Naive thymus-derived CD4-positive, alpha-beta T cell (primary cell): ENCODE measurements at regions of chr19 and their contacts with region 1.

Region 1: GRCh38 chr19:6737284-6738046 is at the start of gene GPR108:
- DNase-seq: peak; percentile 94 to 100 (median 99)
- ATAC-seq: peak; percentile 85
- H3K4me3 ChIP-seq: peak within 1 kb of the TSS; percentile 87
- H3K4me3 Mint-ChIP-seq: peak within 1 kb of the TSS; percentile 89 to 98 (median 96)
- H3K27ac ChIP-seq: peak within 1 kb of the TSS; percentile 86
- H3K27ac Mint-ChIP-seq: peak within 1 kb of the TSS; percentile 90 to 99 (median 96)
- H3K4me1 ChIP-seq: peaks cover 31 to 32% of the 10 kb centered on the region in 2 donors
- H3K4me1 Mint-ChIP-seq: peaks cover 24 to 41% (median 37%) of the 10 kb centered on the region in 7 donors
- H3K27me3 ChIP-seq: no peaks in the 10 kb centered on the region
- H3K27me3 Mint-ChIP-seq: peaks cover 0 to 3% (median 0%) of the 10 kb centered on the region in 5 donors
- total RNA-seq, gene GPR108: 36.1 to 81.6 (median 61.9) TPM

Region 2: GRCh38 chr19:6362027-6362350 is 375.5 kb before region 1 on chr19:
- CTCF ChIA-PET with region 1: no interaction called
- POLR2A ChIA-PET with region 1: no interaction called
- intact Hi-C with region 1: loop called in 1 of 2 experiments (anchors 1 kb)
- DNase-seq: no peak
- ATAC-seq: no peak
- H3K4me3 ChIP-seq: peak overlapping the region; percentile 76
- H3K4me3 Mint-ChIP-seq: peak overlapping the region; percentile 83 to 100 (median 97)
- H3K27ac ChIP-seq: peak overlapping the region; percentile 82
- H3K27ac Mint-ChIP-seq: peak overlapping the region; percentile 87 to 98 (median 96)
- H3K4me1 ChIP-seq: peaks cover 10 to 13% of the 10 kb centered on the region in 2 donors
- H3K4me1 Mint-ChIP-seq: peaks cover 10 to 37% (median 22%) of the 10 kb centered on the region in 7 donors
- H3K27me3 ChIP-seq: no peaks in the 10 kb centered on the region
- H3K27me3 Mint-ChIP-seq: no peaks in the 10 kb centered on the region

Region 3: DNA sequence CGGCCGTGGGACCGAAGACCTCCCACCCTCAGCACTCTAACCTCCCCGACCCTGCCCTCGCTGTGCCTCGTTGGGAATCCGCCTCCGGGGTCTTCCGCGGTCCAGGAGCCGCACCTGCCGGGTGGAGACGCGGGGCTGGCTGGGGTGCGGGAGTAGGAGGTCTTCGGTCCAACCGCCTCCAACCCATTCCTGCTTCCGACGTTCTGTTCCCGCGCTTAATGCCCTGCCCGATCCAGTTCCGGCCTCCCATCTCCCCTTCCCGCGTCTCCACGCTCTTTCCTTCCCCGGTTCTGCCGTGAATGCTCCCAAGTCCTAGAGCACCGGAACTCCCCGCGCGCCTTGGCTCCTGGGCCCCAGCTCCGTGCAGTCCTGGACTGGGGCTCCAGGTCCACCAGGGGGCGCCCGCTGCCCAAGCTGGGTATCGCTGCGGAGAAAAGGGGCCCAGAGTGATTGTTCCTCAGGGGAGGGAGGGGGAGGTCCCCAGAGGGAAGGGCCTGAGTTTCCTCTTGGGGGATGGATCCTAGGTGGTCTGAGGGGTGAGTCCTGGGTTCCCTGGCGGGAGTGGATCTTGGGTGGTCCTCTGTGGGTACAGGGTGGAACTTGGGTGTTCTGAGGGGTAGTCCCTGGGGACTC is 220.7 kb before region 1 on chr19:
- CTCF ChIA-PET with region 1: interaction called, 8 read pairs
- POLR2A ChIA-PET with region 1: no interaction called
- intact Hi-C with region 1: loop called (anchors 1 kb)
- DNase-seq: peak; percentile 72 to 96 (median 85)
- ATAC-seq: peak; percentile 91
- H3K4me3 ChIP-seq: peak overlapping the region; percentile 68
- H3K4me3 Mint-ChIP-seq: peak overlapping the region; percentile 81 to 100 (median 96)
- H3K27ac ChIP-seq: peak overlapping the region; percentile 49
- H3K27ac Mint-ChIP-seq: peak overlapping the region; percentile 22 to 90 (median 69)
- H3K4me1 ChIP-seq: peaks cover 8 to 20% of the 10 kb centered on the region in 2 donors
- H3K4me1 Mint-ChIP-seq: peaks cover 22 to 35% (median 33%) of the 10 kb centered on the region in 7 donors
- H3K27me3 ChIP-seq: no peaks in the 10 kb centered on the region
- H3K27me3 Mint-ChIP-seq: peaks cover 0 to 2% (median 0%) of the 10 kb centered on the region in 5 donors

Region 4: DNA sequence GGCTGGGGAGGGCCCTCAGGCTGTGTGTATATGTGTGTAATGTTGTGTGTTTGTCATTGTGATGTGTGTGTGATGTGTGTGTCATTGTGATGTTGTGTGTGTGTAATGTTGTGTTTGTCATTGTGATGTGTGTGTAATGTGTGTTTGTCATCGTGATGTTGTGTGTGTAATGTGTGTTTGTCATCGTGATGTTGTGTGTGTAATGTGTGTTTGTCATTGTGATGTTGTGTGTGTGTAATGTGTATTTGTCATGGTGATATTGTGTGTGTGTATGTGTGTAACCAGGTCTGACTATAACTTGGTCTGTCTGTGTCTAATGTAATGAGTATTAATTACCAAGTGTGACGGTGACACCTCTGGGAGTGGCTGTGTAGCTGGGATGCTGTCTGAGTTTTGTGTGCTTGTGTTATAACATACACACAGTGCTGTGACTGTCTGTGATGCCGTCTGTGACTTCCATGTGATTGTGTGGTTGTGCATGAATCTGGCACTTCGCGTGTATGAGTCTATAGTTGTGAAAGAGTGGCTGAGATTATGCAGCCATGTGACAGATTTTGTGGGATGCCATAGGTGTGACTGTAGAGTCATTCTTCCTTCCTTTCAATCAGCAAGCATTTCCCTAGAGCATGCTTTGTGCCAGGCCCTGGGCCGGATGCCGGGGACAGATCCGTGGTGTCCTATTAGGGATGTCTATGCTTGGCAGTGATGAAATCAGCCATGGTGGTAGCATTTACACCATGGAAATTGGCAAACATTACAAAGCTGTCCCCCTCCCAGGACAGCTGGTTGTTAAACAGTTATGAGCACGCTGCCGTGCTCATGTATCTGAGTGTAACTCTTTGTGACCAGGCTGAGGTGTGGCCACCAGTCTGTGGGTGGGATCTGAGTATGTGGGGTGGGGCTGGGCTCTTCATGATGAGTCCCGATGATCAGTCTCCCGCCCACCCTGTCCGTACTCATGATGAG is 73.9 kb before region 1 on chr19:
- CTCF ChIA-PET with region 1: no interaction called
- POLR2A ChIA-PET with region 1: no interaction called
- intact Hi-C with region 1: loop called in 1 of 2 experiments (anchors 2 kb)
- DNase-seq: no peak
- ATAC-seq: peak; percentile 62
- H3K4me3 ChIP-seq: no peak overlapping the region
- H3K4me3 Mint-ChIP-seq: no peak overlapping the region
- H3K27ac ChIP-seq: no peak overlapping the region
- H3K27ac Mint-ChIP-seq: peak overlapping the region in 1 of 9 donors; percentile 59
- H3K4me1 ChIP-seq: peaks cover 0 to 48% of the 10 kb centered on the region in 2 donors
- H3K4me1 Mint-ChIP-seq: peaks cover 1 to 29% (median 20%) of the 10 kb centered on the region in 7 donors
- H3K27me3 ChIP-seq: no peaks in the 10 kb centered on the region
- H3K27me3 Mint-ChIP-seq: peaks cover 0 to 3% (median 0%) of the 10 kb centered on the region in 5 donors

Region 5: DNA sequence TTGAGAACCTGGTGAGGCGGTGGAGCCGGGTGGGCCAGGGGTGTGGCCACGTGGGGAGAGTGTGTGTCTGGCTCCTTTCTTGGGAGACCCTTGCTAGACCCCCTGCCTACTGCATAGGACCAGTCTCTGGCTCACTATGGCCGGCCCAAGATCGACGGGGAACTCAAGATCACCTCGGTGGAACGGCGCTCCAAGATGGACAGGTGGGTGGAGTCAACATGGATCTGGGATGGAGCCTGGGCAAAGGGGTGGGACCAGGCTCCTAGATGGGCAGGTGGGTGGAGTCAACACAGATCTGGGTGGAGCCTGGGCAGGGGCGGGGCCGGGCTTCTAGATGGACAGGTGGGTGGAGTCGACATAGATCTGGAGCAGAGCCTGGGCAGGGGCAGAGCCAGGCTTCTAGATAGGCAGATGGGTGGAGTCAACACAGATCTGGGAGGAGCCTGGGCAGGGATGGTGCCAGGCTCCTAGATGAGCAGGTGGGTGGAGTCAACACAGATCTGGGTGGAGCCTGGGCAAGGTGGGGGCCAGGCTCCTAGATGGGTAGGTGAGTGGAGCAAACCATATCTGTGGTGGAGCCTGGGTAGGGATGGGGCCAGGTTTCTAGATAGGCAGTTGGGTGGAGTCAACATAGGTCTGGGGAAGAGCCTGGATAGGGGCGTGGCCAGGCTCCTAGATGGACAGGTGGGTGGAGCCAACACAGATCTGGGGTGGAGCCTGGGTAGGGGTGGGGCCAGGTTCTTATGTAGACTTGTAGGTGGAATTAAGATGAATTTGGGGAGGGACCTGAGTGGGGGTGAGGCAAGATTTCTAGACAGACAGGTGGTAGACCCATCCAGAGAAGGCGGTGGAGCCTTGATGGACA is 91.5 kb after region 1 on chr19:
- CTCF ChIA-PET with region 1: no interaction called
- POLR2A ChIA-PET with region 1: no interaction called
- intact Hi-C with region 1: no loop called
- DNase-seq: peak in 6 of 9 donors; percentile 13 to 38 (median 16)
- ATAC-seq: peak; percentile 79
- H3K4me3 ChIP-seq: no peak overlapping the region
- H3K4me3 Mint-ChIP-seq: no peak overlapping the region
- H3K27ac ChIP-seq: no peak overlapping the region
- H3K27ac Mint-ChIP-seq: peak overlapping the region; percentile 54 to 92 (median 81)
- H3K4me1 ChIP-seq: no peaks in the 10 kb centered on the region
- H3K4me1 Mint-ChIP-seq: peaks cover 4 to 19% (median 9%) of the 10 kb centered on the region in 7 donors
- H3K27me3 ChIP-seq: no peaks in the 10 kb centered on the region
- H3K27me3 Mint-ChIP-seq: no peaks in the 10 kb centered on the region

Region 6: DNA sequence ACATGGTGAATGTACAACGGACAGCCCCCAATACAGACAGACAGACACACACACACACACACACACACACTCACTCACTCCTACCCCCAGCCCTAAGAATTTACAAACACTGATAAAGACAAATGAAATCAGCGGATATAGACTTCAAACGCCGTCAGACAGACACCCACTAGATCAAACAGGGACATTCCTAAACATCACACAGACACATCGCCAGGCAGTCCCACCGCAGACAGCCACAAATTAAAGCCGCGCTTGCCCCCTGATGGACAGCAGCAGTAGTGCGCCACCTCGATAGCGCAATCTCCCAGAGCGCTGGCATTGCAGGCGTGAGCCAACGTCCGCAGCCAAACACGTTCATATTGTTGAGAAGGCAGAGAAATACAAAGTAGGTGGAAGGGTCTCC is 125.2 kb after region 1 on chr19:
- CTCF ChIA-PET with region 1: interaction called, 64 read pairs
- POLR2A ChIA-PET with region 1: interaction called, 35 read pairs
- intact Hi-C with region 1: loop called (anchors 1 kb)
- DNase-seq: peak; percentile 73 to 91 (median 88)
- ATAC-seq: peak; percentile 94
- H3K4me3 ChIP-seq: peak overlapping the region; percentile 12
- H3K4me3 Mint-ChIP-seq: peak overlapping the region; percentile 81 to 92 (median 86)
- H3K27ac ChIP-seq: peak overlapping the region; percentile 23
- H3K27ac Mint-ChIP-seq: peak overlapping the region; percentile 56 to 92 (median 82)
- H3K4me1 ChIP-seq: peaks cover 0 to 3% of the 10 kb centered on the region in 2 donors
- H3K4me1 Mint-ChIP-seq: peaks cover 17 to 39% (median 28%) of the 10 kb centered on the region in 7 donors
- H3K27me3 ChIP-seq: no peaks in the 10 kb centered on the region
- H3K27me3 Mint-ChIP-seq: no peaks in the 10 kb centered on the region

Region 7: DNA sequence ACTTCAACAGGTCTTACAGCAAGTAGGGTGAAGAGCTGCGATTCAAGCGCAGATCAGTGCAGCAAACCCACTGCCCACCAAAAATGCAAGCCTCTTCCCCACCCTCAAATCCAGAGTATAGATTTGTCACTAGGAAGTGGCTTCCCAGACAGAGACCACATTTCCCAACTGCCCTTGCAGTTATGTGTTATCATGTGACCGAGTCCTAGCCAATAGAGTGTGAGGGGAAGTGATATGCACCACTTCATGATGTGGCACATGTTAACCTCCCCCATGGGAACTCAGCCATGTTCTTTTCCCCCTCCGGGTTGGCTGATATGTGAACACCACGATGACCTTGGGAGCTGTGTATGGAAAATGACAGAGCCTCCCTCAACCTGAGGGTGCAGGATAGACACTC is 233.0 kb after region 1 on chr19:
- CTCF ChIA-PET with region 1: no interaction called
- POLR2A ChIA-PET with region 1: no interaction called
- intact Hi-C with region 1: no loop called
- DNase-seq: no peak
- ATAC-seq: peak; percentile 61
- H3K4me3 ChIP-seq: no peak overlapping the region
- H3K4me3 Mint-ChIP-seq: no peak overlapping the region
- H3K27ac ChIP-seq: no peak overlapping the region
- H3K27ac Mint-ChIP-seq: no peak overlapping the region
- H3K4me1 ChIP-seq: no peaks in the 10 kb centered on the region
- H3K4me1 Mint-ChIP-seq: peaks cover 0 to 8% (median 3%) of the 10 kb centered on the region in 7 donors
- H3K27me3 ChIP-seq: no peaks in the 10 kb centered on the region
- H3K27me3 Mint-ChIP-seq: no peaks in the 10 kb centered on the region

Region 8: GRCh38 chr19:7069042-7069903 is 331.8 kb after region 1 on chr19 and contains the start of gene ZNF557:
- CTCF ChIA-PET with region 1: interaction called, 3 read pairs
- POLR2A ChIA-PET with region 1: interaction called, 7 read pairs
- intact Hi-C with region 1: loop called in 1 of 2 experiments (anchors 10 kb)
- DNase-seq: peak; percentile 93 to 100 (median 99)
- ATAC-seq: peak; percentile 99
- H3K4me3 ChIP-seq: peak within 1 kb of the TSS; percentile 100
- H3K4me3 Mint-ChIP-seq: peak within 1 kb of the TSS; percentile 90 to 98 (median 94)
- H3K27ac ChIP-seq: peak within 1 kb of the TSS; percentile 84
- H3K27ac Mint-ChIP-seq: peak within 1 kb of the TSS; percentile 63 to 95 (median 94)
- H3K4me1 ChIP-seq: peaks cover 14% of the 10 kb centered on the region in 2 donors
- H3K4me1 Mint-ChIP-seq: peaks cover 7 to 40% (median 19%) of the 10 kb centered on the region in 7 donors
- H3K27me3 ChIP-seq: no peaks in the 10 kb centered on the region
- H3K27me3 Mint-ChIP-seq: no peaks in the 10 kb centered on the region
- total RNA-seq, gene ZNF557: 11.7 to 36.2 (median 20.0) TPM

Region 9: GRCh38 chr19:7482584-7483439 is 745.3 kb after region 1 on chr19:
- CTCF ChIA-PET with region 1: no interaction called
- POLR2A ChIA-PET with region 1: no interaction called
- intact Hi-C with region 1: no loop called
- DNase-seq: no peak
- ATAC-seq: peak; percentile 30
- H3K4me3 ChIP-seq: no peak overlapping the region
- H3K4me3 Mint-ChIP-seq: peak overlapping the region in 8 of 10 donors; percentile 5 to 68 (median 42)
- H3K27ac ChIP-seq: no peak overlapping the region
- H3K27ac Mint-ChIP-seq: peak overlapping the region in 7 of 9 donors; percentile 25 to 85 (median 67)
- H3K4me1 ChIP-seq: peaks cover 0 to 9% of the 10 kb centered on the region in 2 donors
- H3K4me1 Mint-ChIP-seq: peaks cover 5 to 22% (median 11%) of the 10 kb centered on the region in 7 donors
- H3K27me3 ChIP-seq: no peaks in the 10 kb centered on the region
- H3K27me3 Mint-ChIP-seq: no peaks in the 10 kb centered on the region